B cell (primary cell): ENCODE measurements at regions of chr2 and their contacts with region 1.

Region 1: DNA sequence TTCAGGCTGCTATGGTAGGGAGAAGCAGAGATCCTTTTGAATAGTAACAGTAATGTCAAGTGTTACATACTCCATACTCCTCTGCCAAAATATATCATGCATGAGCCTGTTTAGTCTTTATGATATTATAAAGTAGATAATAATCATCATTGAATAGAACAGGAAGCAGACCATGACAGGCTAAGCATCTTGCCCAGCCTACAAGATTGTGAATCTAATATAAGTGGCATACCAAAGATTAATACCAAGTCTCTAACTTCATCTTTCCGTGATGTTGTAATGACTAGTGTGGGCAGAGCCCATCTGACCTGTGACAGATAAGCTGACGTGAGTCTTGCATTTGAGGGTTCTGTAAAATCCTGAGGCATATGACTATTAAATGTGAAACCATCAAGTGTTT is 13.1 kb downstream of the NDUFB3 start:
- DNase-seq: no peak
- ATAC-seq: no peak
- H3K4me3 ChIP-seq: no peak overlapping the region
- H3K4me3 Mint-ChIP-seq: no peak overlapping the region
- H3K27ac ChIP-seq: no peak overlapping the region
- H3K27ac Mint-ChIP-seq: no peak overlapping the region
- H3K4me1 ChIP-seq: no peaks in the 10 kb centered on the region
- H3K4me1 Mint-ChIP-seq: no peaks in the 10 kb centered on the region
- H3K27me3 ChIP-seq: no peaks in the 10 kb centered on the region
- H3K27me3 Mint-ChIP-seq: no peaks in the 10 kb centered on the region
- CTCF ChIP-seq: no peak

Region 2: GRCh38 chr2:201100497-201100896 is 15.6 kb after region 1 on chr2:
- CTCF ChIA-PET with region 1: interaction called, 3 read pairs
- POLR2A ChIA-PET with region 1: interaction called, 13 read pairs
- intact Hi-C with region 1: no loop called
- DNase-seq: no peak
- ATAC-seq: no peak
- H3K4me3 ChIP-seq: no peak overlapping the region
- H3K4me3 Mint-ChIP-seq: no peak overlapping the region
- H3K27ac ChIP-seq: no peak overlapping the region
- H3K27ac Mint-ChIP-seq: no peak overlapping the region
- H3K4me1 ChIP-seq: no peaks in the 10 kb centered on the region
- H3K4me1 Mint-ChIP-seq: peaks cover 4% of the 10 kb centered on the region
- H3K27me3 ChIP-seq: no peaks in the 10 kb centered on the region
- H3K27me3 Mint-ChIP-seq: no peaks in the 10 kb centered on the region
- CTCF ChIP-seq: no peak

Region 3: DNA sequence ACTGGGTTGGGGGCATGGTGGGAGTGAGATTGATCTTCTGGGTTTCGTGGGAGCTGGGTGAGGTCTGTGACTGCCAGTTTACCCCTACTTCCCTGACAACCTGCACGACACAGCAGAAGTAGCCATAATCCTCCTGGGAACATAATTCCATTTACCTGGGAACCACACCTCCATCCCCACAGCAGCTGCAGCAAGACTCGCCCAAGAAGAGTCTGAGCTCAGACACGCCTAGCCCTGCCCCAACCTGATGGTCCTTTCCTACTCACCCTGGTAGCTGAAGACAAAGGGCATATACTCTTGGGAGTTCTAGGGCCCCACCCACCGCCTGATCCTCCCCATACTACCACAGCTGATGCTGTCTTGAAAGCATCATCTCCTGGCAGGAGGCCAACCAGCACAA is 228.5 kb after region 1 on chr2:
- CTCF ChIA-PET with region 1: no interaction called
- POLR2A ChIA-PET with region 1: no interaction called
- intact Hi-C with region 1: no loop called
- DNase-seq: no peak
- ATAC-seq: no peak
- H3K4me3 ChIP-seq: no peak overlapping the region
- H3K4me3 Mint-ChIP-seq: no peak overlapping the region
- H3K27ac ChIP-seq: no peak overlapping the region
- H3K27ac Mint-ChIP-seq: no peak overlapping the region
- H3K4me1 ChIP-seq: no peaks in the 10 kb centered on the region
- H3K4me1 Mint-ChIP-seq: no peaks in the 10 kb centered on the region
- H3K27me3 ChIP-seq: no peaks in the 10 kb centered on the region
- H3K27me3 Mint-ChIP-seq: no peaks in the 10 kb centered on the region
- CTCF ChIP-seq: no peak